ENCODE measurements at regions of chr7 and their contacts with region 1.

Region 1: GRCh38 chr7:99312316-99313203 is 13.1 kb upstream of the ARPC1A start:
- DNase-seq: peak in 3 of 4 donors; percentile 24 to 61 (median 50)
- ATAC-seq: peak; percentile 91
- H3K4me3 ChIP-seq: no peak overlapping the region
- H3K27ac ChIP-seq: no peak overlapping the region
- H3K4me1 ChIP-seq: peaks cover 6 to 8% of the 10 kb centered on the region in 2 donors
- H3K27me3 ChIP-seq: no peaks in the 10 kb centered on the region
- CTCF ChIP-seq: peak; percentile 85 to 88

Region 2: GRCh38 chr7:99040104-99040958 is 272.2 kb before region 1 on chr7:
- intact Hi-C with region 1: loop called in 1 of 2 experiments (anchors 5 kb)
- DNase-seq: peak in 3 of 4 donors; percentile 68 to 90 (median 79)
- ATAC-seq: peak; percentile 86
- H3K4me3 ChIP-seq: no peak overlapping the region
- H3K27ac ChIP-seq: no peak overlapping the region
- H3K4me1 ChIP-seq: no peaks in the 10 kb centered on the region
- H3K27me3 ChIP-seq: no peaks in the 10 kb centered on the region
- CTCF ChIP-seq: peak; percentile 60 to 74